K562 (cell line): ENCODE measurements at regions of chr22 and their contacts with region 1.

Region 1: GRCh38 chr22:26756675-26757293 is 99.4 kb downstream of the MIAT start:
- DNase-seq: peak; percentile 57 to 82 (median 76)
- ATAC-seq: peak; percentile 89
- H3K4me3 ChIP-seq: no peak overlapping the region
- H3K27ac ChIP-seq: no peak overlapping the region
- H3K4me1 ChIP-seq: peaks cover 0 to 6% of the 10 kb centered on the region in 2 experiments; a peak in 2 of 5 replicates
- H3K27me3 ChIP-seq: no peaks in the 10 kb centered on the region
- CTCF ChIP-seq: peak; percentile 63 to 82 (median 66)
- EP300 ChIP-seq: no peak
- POLR2A ChIP-seq: no peak
- RAD21 ChIP-seq: peak; percentile 63 to 80

Region 2: GRCh38 chr22:26642465-26643417 is 114.0 kb before region 1 on chr22:
- CTCF ChIA-PET with region 1: no interaction called
- POLR2A ChIA-PET with region 1: no interaction called
- in situ Hi-C with region 1: no loop called
- intact Hi-C with region 1: no loop called
- DNase-seq: peak; percentile 57 to 84 (median 62)
- ATAC-seq: peak; percentile 52
- H3K4me3 ChIP-seq: no peak overlapping the region
- H3K27ac ChIP-seq: peak overlapping the region; percentile 76
- H3K4me1 ChIP-seq: peaks cover 34 to 44% of the 10 kb centered on the region in 2 experiments; a peak in 4 of 5 replicates
- H3K27me3 ChIP-seq: no peaks in the 10 kb centered on the region
- CTCF ChIP-seq: peak; percentile 47 to 62 (median 48); a peak in 5 of 6 replicates
- EP300 ChIP-seq: 0 out of 2 replicates have a peak, but pooled peaks have one; percentile 27
- POLR2A ChIP-seq: peak; percentile 48; the same call in 1 of the 2 replicates
- RAD21 ChIP-seq: peak in 1 of 2 experiments; percentile 43; a peak in 2 of 4 replicates

Region 3: GRCh38 chr22:26679003-26679629 is 77.7 kb before region 1 on chr22:
- CTCF ChIA-PET with region 1: no interaction called
- POLR2A ChIA-PET with region 1: no interaction called
- in situ Hi-C with region 1: no loop called
- intact Hi-C with region 1: loop called (anchors 5 kb)
- DNase-seq: peak; percentile 69 to 78 (median 73)
- ATAC-seq: peak; percentile 91
- H3K4me3 ChIP-seq: no peak overlapping the region
- H3K27ac ChIP-seq: no peak overlapping the region
- H3K4me1 ChIP-seq: peaks cover 8 to 14% of the 10 kb centered on the region in 2 experiments; a peak in 4 of 5 replicates
- H3K27me3 ChIP-seq: no peaks in the 10 kb centered on the region
- CTCF ChIP-seq: peak; percentile 77 to 87 (median 81)
- EP300 ChIP-seq: no peak
- POLR2A ChIP-seq: no peak
- RAD21 ChIP-seq: peak; percentile 59 to 72

Region 4: DNA sequence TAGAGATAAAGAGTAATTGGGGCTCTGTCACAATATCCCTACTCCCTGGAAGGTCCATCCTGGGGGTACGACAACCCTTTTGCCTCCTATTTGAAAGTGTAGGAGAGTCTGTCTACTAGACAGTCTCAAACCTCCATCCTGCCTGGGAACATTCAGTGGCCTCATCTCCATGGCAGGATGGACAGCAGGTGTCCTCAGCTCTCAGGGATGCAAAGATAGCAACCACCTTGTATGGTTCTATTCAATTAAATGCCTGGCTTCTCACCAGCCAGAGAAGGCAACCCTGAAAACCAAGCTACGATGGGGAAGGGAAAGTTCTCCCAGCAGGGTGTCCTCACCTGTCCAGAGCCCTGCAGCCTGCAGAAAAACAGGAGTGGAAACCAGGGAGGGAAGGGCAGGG is 65.5 kb after region 1 on chr22:
- CTCF ChIA-PET with region 1: no interaction called
- POLR2A ChIA-PET with region 1: no interaction called
- in situ Hi-C with region 1: no loop called
- intact Hi-C with region 1: loop called (anchors 5 kb)
- DNase-seq: no peak
- ATAC-seq: no peak
- H3K4me3 ChIP-seq: no peak overlapping the region
- H3K27ac ChIP-seq: no peak overlapping the region
- H3K4me1 ChIP-seq: no peaks in the 10 kb centered on the region
- H3K27me3 ChIP-seq: peaks cover 0 to 4% of the 10 kb centered on the region in 2 experiments; a peak in 1 of 5 replicates
- CTCF ChIP-seq: no peak
- EP300 ChIP-seq: no peak
- POLR2A ChIP-seq: no peak
- RAD21 ChIP-seq: no peak

Region 5: DNA sequence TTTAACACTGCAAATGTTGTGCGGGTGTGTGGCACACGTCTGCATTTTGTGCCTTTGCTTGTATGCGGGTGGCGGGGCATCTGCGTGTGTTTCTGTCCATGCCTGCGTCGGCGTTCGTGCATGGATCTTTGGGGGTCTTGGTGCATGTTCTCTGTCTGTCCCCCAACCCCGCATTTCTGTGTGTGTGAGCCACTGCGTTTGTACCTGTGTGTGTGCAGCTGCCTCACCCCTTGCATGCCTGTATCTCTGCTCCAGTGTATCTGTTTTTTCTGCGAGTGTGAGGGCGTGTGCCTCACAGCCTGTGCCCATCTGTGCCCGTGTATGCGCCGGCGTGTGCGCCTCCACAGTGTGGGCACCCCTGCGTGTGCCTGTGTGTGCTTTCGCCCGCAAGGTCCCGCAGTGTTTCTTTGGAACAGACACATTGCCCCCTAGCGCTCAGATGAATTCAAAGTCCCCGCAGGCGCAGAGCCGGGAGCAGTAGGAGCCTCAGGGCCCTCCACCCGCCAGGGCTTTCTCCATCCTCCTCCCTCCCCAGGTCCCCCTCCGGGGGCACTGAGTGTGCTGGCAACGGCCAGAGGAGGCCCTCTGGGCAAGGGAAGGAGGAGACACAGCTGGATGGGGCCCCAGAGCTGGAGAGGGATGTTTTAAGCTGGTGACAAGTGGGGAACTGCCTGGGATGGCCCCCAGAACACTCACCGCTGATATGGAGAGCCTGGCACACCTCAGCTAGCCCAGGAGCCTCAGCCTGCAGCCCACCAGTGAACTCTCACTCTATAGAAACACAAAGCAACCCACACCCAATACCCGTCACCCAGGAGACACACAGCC is 1047.9 kb after region 1 on chr22:
- CTCF ChIA-PET with region 1: interaction called, 3 read pairs
- POLR2A ChIA-PET with region 1: no interaction called
- in situ Hi-C with region 1: loop called (anchors 25 kb)
- intact Hi-C with region 1: loop called (anchors 10 kb)
- DNase-seq: peak; percentile 47 to 67 (median 52)
- ATAC-seq: peak; percentile 94
- H3K4me3 ChIP-seq: no peak overlapping the region
- H3K27ac ChIP-seq: no peak overlapping the region
- H3K4me1 ChIP-seq: peaks cover 0 to 30% of the 10 kb centered on the region in 2 experiments; a peak in 2 of 5 replicates
- H3K27me3 ChIP-seq: peaks cover 2 to 40% of the 10 kb centered on the region in 2 experiments
- CTCF ChIP-seq: peak; percentile 63 to 70 (median 67)
- EP300 ChIP-seq: no peak
- POLR2A ChIP-seq: no peak
- RAD21 ChIP-seq: peak; percentile 59 to 77

Region 6: DNA sequence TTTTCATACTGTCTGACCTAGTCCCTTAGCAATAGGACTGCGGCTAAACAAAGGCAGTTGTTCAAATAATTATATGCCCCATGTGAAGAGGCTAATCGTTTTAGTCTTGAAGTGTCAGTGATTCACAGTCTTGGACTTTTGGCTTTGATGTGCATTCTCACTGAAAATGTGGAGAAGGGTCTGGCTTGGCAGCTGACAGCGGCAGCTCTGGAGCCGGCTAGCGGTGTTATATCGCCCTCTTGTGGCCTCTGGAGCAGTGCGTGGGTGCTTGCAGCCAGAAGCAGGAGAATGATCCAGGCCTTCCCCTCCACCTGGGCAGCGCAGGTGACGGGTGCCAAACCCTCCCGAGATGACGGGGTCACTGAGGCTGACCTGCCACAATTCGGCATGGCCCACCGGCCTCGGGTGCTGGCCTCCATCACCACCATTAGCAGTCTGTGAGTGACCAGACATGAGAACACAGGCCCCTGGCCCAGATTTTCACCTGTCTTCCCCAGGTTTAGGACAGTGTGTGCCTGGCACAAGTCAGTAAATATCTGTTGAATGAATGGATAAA is 1252.6 kb after region 1 on chr22:
- CTCF ChIA-PET with region 1: no interaction called
- POLR2A ChIA-PET with region 1: no interaction called
- in situ Hi-C with region 1: loop called (anchors 25 kb)
- intact Hi-C with region 1: no loop called
- DNase-seq: peak; percentile 72 to 83 (median 79)
- ATAC-seq: peak; percentile 98
- H3K4me3 ChIP-seq: no peak overlapping the region
- H3K27ac ChIP-seq: no peak overlapping the region
- H3K4me1 ChIP-seq: no peaks in the 10 kb centered on the region
- H3K27me3 ChIP-seq: no peaks in the 10 kb centered on the region
- CTCF ChIP-seq: peak; percentile 83 to 89 (median 85)
- EP300 ChIP-seq: no peak
- POLR2A ChIP-seq: no peak
- RAD21 ChIP-seq: peak; percentile 78 to 86